ENCODE measurements at regions of chr15 and their contacts with region 1.

Region 1: GRCh38 chr15:91075739-91076138 is 24.3 kb upstream of the SV2B start:
- DNase-seq: no peak
- H3K4me3 ChIP-seq: no peak overlapping the region
- H3K27ac ChIP-seq: no peak overlapping the region
- H3K4me1 ChIP-seq: no peaks in the 10 kb centered on the region
- H3K27me3 ChIP-seq: peaks cover 40% of the 10 kb centered on the region; the same call in 1 of the 2 replicates
- CTCF ChIP-seq: no peak

Region 2: GRCh38 chr15:89857673-89858072 is 1218.1 kb before region 1 on chr15:
- CTCF ChIA-PET with region 1: no interaction called
- POLR2A ChIA-PET with region 1: no interaction called
- intact Hi-C with region 1: no loop called
- DNase-seq: no peak
- H3K4me3 ChIP-seq: no peak overlapping the region
- H3K27ac ChIP-seq: no peak overlapping the region
- H3K4me1 ChIP-seq: no peaks in the 10 kb centered on the region
- H3K27me3 ChIP-seq: no peaks in the 10 kb centered on the region
- CTCF ChIP-seq: no peak

Region 3: GRCh38 chr15:91192690-91193377 is 117.1 kb after region 1 on chr15:
- CTCF ChIA-PET with region 1: no interaction called
- POLR2A ChIA-PET with region 1: no interaction called
- intact Hi-C with region 1: loop called (anchors 10 kb)
- DNase-seq: no peak
- H3K4me3 ChIP-seq: no peak overlapping the region
- H3K27ac ChIP-seq: no peak overlapping the region
- H3K4me1 ChIP-seq: no peaks in the 10 kb centered on the region
- H3K27me3 ChIP-seq: peaks cover 45% of the 10 kb centered on the region
- CTCF ChIP-seq: no peak

Measured in PC-9 (cell line).